ENCODE measurements at regions of chr7 and their contacts with region 1.

Region 1: DNA sequence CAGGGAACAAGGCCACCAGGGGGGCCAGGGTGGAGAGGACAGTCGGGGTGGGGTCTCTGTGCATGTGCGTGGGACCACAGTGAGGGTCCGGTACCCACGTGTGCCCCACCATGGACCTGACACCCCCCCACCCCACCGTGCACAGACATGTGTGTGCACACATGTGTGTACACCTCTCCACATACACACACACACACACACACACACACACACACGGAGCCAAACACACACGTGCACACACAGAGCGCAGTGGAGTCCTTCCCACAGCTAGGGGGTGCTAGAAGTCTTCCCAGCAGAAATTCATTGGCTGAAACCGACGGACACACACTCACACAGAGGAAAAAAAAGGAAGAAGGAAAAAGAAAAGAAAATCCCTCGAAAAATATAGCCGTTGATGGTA is 42.8 kb upstream of the GNA12 start:
- DNase-seq: peak; percentile 47 to 78 (median 67)
- H3K4me3 ChIP-seq: no peak overlapping the region
- H3K27ac ChIP-seq: no peak overlapping the region
- H3K4me1 ChIP-seq: no peaks in the 10 kb centered on the region
- H3K27me3 ChIP-seq: no peaks in the 10 kb centered on the region
- CTCF ChIP-seq: peak; percentile 34 to 47 (median 41)
- EP300 ChIP-seq: no peak
- POLR2A ChIP-seq: no peak

Region 2: DNA sequence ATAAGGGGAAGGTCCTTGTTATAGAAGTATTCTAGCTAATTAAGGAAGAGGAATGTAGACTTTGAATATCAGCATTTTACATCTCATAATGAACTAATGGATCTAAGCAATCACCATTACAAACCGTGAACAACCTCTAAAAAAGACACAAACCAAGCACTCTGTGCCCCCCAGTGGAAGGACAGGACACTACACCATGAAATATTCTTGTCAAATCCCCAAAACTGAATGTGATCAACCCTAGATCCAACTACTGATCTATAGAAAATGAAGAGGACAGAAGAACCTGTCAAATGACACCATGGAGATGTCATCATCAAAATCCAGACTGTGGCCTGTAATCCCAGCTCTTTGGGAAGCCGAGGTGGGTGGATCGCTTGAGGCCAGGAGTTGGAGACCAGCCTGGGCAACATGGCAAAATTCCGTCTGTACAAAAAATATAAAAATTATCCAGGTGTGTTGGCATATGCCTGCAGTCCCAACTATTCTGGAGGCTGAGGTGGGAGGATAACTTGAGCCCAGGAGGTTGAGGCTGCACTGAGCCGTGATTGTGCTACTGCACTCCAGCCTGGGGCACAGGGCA is 268.1 kb after region 1 on chr7:
- intact Hi-C with region 1: loop called in 1 of 4 experiments (anchors 10 kb)
- DNase-seq: no peak
- H3K4me3 ChIP-seq: no peak overlapping the region
- H3K27ac ChIP-seq: no peak overlapping the region
- H3K4me1 ChIP-seq: no peaks in the 10 kb centered on the region
- H3K27me3 ChIP-seq: no peaks in the 10 kb centered on the region
- CTCF ChIP-seq: no peak
- EP300 ChIP-seq: no peak
- POLR2A ChIP-seq: no peak

Region 3: GRCh38 chr7:3250725-3251124 is 363.8 kb after region 1 on chr7:
- intact Hi-C with region 1: no loop called
- DNase-seq: no peak
- H3K4me3 ChIP-seq: no peak overlapping the region
- H3K27ac ChIP-seq: no peak overlapping the region
- H3K4me1 ChIP-seq: no peaks in the 10 kb centered on the region
- H3K27me3 ChIP-seq: no peaks in the 10 kb centered on the region
- CTCF ChIP-seq: no peak
- EP300 ChIP-seq: no peak
- POLR2A ChIP-seq: no peak